Mammary epithelial cell (primary cell): ENCODE measurements at regions of chr9 and their contacts with region 1.

Region 1: DNA sequence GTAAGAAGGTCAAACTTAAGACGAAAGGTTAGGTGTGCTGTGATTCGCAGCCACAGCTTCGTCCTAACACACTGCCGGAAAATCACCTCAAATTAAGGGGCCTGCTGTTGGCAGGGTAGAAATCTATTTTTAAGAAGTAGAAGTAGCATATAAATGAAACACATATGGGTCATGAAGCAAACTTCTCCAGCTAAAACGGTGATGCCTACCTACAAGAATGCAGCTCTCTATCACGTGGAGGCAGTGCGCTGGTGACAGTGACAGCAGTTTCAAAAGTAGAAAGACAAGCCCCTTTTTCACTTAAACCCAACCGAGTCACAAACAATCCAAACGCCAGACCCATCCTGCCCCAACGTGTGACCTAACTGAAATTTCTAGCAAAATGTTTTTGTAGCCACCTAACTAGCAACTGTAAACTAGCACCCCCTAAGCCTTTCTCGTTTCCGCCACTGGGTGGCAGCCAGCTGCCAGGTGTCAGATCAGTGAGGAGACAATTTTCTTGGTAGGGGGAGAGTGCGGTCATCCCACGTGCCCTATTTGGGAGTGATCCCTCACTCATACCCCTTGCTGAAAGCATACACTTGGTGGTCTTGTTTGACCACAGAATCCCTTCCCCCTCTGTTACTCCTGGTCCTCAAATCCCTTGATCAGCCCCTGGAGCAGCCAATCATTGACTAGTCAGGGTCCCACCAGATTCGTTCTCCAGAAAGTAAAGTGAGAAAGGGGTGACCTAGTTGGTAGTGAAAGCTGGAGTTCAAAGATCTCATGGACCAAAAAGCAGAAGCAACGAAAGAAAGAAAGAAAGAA is 71.8 kb upstream of the MAMDC2 start:
- DNase-seq: peak; percentile 46
- H3K4me3 ChIP-seq: no peak overlapping the region
- H3K27ac ChIP-seq: no peak overlapping the region
- H3K4me1 ChIP-seq: peaks cover 13% of the 10 kb centered on the region
- H3K27me3 ChIP-seq: no peaks in the 10 kb centered on the region
- CTCF ChIP-seq: peak; percentile 89 to 97

Region 2: DNA sequence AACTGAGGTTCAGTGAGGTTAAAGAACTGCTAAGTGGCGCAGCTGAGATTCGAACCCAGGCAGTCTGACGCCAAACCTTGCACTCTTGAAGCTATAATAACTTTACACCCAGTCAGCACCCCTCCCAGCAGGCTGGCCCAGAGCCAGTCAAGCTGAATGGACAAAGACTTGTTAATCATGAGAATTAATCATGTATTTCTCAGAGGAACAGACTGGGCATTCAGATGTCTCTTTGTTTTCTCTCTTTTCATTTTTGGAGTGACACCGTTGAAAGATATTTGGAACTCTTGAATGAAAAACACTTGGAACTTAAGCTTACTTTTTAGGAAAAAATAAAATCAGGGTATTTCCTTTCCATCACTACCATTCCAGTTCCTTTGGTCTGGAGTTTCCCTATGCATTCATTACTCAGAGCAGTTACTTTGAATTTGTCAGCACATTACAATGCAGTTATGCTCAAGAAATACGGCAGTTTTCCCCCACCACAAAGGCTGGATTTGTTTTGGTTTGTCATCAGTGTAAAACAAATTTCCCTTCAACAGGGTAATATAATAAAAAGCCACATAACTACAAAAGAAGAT is 49.2 kb after region 1 on chr9:
- CTCF ChIA-PET with region 1: interaction called, 3 read pairs
- dilution Hi-C with region 1: no loop called
- in situ Hi-C with region 1: no loop called
- intact Hi-C with region 1: loop called (anchors 2 kb)
- DNase-seq: peak; percentile 95
- H3K4me3 ChIP-seq: no peak overlapping the region
- H3K27ac ChIP-seq: peak overlapping the region; percentile 95
- H3K4me1 ChIP-seq: peaks cover 28% of the 10 kb centered on the region
- H3K27me3 ChIP-seq: no peaks in the 10 kb centered on the region
- CTCF ChIP-seq: no peak

Region 3: GRCh38 chr9:70031141-70031545 is 59.3 kb after region 1 on chr9:
- CTCF ChIA-PET with region 1: no interaction called
- dilution Hi-C with region 1: no loop called
- in situ Hi-C with region 1: no loop called
- intact Hi-C with region 1: no loop called
- DNase-seq: peak; percentile 84
- H3K4me3 ChIP-seq: no peak overlapping the region
- H3K27ac ChIP-seq: peak overlapping the region; percentile 64
- H3K4me1 ChIP-seq: peaks cover 14% of the 10 kb centered on the region
- H3K27me3 ChIP-seq: no peaks in the 10 kb centered on the region
- CTCF ChIP-seq: no peak

Region 4: GRCh38 chr9:70043689-70044489 is 72.0 kb after region 1 on chr9 and contains the start of gene MAMDC2:
- CTCF ChIA-PET with region 1: no interaction called
- dilution Hi-C with region 1: no loop called
- in situ Hi-C with region 1: no loop called
- intact Hi-C with region 1: loop called (anchors 1 kb)
- DNase-seq: peak; percentile 57
- H3K4me3 ChIP-seq: peak within 1 kb of the TSS; percentile 46 to 61 (median 60)
- H3K27ac ChIP-seq: peak within 1 kb of the TSS; percentile 20
- H3K4me1 ChIP-seq: peaks cover 60% of the 10 kb centered on the region
- H3K27me3 ChIP-seq: no peaks in the 10 kb centered on the region
- CTCF ChIP-seq: no peak
- total RNA-seq, gene MAMDC2: 8.3 to 33.5 TPM

Region 5: DNA sequence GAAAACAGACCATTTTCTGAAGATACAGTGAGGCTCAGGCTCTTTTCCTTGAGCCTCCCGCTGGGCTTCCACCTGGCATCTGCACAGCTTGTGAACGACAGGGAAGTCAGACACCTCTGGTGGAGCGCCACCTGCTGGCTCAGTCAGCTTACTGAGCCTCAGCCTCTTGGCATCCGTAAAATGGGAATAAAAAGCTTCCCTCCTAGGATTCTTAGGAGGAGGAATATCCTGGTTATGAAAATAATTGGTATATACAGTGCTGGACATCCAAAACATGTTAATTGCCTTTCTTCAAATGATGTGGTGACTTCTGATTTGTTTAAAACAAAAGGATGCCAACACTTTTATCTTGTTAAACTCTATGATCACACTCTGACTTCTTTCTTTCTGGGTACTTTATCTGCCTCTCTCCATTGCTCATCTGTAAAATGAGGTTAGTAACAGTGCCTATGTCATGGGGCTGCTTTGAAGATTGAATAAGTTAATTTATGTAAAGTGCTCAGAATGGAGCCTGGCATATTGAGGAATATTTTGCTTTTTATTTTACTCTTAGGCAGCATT is 139.3 kb after region 1 on chr9:
- CTCF ChIA-PET with region 1: interaction called, 16 read pairs
- dilution Hi-C with region 1: loop called (anchors 25 kb)
- in situ Hi-C with region 1: loop called (anchors 5 kb)
- intact Hi-C with region 1: loop called (anchors 1 kb)
- DNase-seq: peak; percentile 57
- H3K4me3 ChIP-seq: no peak overlapping the region
- H3K27ac ChIP-seq: peak overlapping the region; percentile 58
- H3K4me1 ChIP-seq: peaks cover 56% of the 10 kb centered on the region
- H3K27me3 ChIP-seq: no peaks in the 10 kb centered on the region
- CTCF ChIP-seq: peak; percentile 89 to 91

Region 6: GRCh38 chr9:70229579-70229978 is 257.7 kb after region 1 on chr9:
- CTCF ChIA-PET with region 1: interaction called, 3 read pairs
- dilution Hi-C with region 1: no loop called
- in situ Hi-C with region 1: loop called (anchors 25 kb)
- intact Hi-C with region 1: loop called (anchors 1 kb)
- DNase-seq: peak; percentile 13
- H3K4me3 ChIP-seq: no peak overlapping the region
- H3K27ac ChIP-seq: no peak overlapping the region
- H3K4me1 ChIP-seq: no peaks in the 10 kb centered on the region
- H3K27me3 ChIP-seq: no peaks in the 10 kb centered on the region
- CTCF ChIP-seq: peak; percentile 40

Region 7: DNA sequence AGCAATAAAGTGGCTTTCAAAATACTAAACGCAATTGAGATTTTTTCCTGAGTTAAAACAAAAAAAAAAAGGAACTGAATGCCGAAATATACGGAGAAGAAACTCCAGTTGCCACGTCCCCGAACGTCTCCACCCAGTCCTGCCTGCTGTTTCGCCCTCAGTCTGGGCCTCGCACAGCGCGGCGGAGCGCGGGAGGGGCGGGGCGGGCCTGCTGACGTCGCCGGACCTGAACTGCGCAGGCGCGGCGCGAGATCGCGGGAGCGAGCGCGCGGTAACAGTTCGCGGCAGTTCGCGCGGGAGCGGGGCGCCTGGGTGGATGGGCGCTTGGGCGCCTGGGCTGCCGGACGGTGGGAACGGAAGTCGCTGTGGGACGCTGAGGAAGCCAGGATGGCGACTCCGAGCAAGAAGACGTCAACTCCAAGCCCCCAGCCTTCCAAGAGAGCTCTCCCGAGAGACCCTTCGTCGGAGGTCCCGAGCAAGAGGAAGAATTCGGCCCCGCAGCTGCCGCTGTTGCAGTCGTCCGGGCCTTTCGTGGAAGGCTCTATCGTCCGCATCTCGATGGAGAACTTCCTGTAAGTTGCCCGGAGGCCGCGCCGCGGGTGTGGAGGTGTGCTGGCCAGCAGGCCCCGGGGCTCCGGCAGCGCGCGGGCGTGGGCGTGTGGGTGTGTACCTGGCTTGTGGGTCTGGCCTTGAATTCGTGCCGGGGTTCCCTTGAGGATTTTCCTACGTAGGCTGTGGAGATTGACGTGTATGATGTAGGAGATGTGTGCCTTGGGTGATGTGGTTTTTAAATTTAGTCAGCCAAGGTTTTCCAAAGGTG is 287.1 kb after region 1 on chr9 and contains the start of gene SMC5:
- CTCF ChIA-PET with region 1: no interaction called
- dilution Hi-C with region 1: loop called (anchors 25 kb)
- in situ Hi-C with region 1: no loop called
- intact Hi-C with region 1: loop called (anchors 1 kb)
- DNase-seq: peak; percentile 94
- H3K4me3 ChIP-seq: peak within 1 kb of the TSS; percentile 57 to 87 (median 87)
- H3K27ac ChIP-seq: peak within 1 kb of the TSS; percentile 94
- H3K4me1 ChIP-seq: peaks cover 65% of the 10 kb centered on the region
- H3K27me3 ChIP-seq: no peaks in the 10 kb centered on the region
- CTCF ChIP-seq: no peak
- total RNA-seq, gene SMC5: 24.8 to 28.0 TPM

Region 8: GRCh38 chr9:70587201-70587600 is 615.4 kb after region 1 on chr9:
- CTCF ChIA-PET with region 1: no interaction called
- dilution Hi-C with region 1: no loop called
- in situ Hi-C with region 1: loop called in 1 of 2 experiments (anchors 25 kb)
- intact Hi-C with region 1: no loop called
- DNase-seq: no peak
- H3K4me3 ChIP-seq: no peak overlapping the region
- H3K27ac ChIP-seq: no peak overlapping the region
- H3K4me1 ChIP-seq: peaks cover 16% of the 10 kb centered on the region
- H3K27me3 ChIP-seq: no peaks in the 10 kb centered on the region
- CTCF ChIP-seq: no peak